Activated naive CD4-positive, alpha-beta T cell treated with anti-CD3 and anti-CD28 coated beads for 36 hours (primary cell): ENCODE measurements at regions of chrX and their contacts with region 1.

Region 1: DNA sequence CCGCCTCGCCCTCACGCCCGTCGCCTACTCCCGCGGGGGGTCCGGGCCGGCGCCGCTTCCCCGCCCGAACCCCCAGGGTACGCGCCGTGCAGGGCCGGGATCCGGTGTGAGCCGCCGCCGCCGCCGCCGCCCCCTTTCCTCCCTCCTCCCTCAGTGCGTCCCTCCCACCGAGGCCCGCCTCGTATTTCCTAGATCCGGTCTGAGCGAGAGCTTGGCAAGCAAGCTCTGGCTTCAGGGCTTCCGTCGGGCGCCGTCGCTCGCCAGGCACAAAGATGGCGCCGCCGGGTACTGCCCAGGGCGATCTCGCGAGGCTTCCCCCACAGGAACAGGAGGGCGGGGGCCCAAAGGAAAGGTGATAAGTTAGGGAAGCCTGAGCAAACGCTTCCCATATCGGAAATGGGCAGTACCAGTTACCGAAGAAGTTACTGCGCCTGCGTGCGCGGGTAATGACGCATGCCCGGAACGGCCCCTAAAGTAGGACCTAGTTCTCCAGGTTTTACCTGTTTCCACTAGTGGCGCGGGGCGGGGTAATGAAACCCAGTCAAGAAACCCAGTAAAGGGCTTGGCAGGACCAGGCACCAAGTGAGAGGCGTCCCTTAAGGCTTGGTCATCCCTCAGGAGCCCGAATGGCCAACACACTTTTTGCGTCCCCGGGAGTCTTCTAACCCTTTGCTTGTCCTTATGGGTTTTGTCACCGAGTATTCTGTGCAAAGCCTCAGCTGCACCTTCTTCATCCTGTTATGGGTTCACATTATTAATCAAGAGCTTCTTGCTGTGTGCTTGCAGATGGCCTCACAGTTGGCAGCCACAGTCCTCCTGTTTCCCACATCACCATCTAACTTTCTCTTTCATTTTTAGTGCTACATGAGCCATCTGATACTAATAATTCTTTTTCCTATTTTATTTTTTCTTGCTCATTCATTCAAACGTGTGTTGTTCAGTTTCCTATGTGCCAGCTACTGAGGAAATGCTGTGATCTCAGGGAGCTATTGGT is at the start of gene TAB3:
- DNase-seq: peak; percentile 95
- H3K4me3 Mint-ChIP-seq: peak within 1 kb of the TSS; percentile 85
- H3K27ac Mint-ChIP-seq: peak within 1 kb of the TSS; percentile 93
- H3K4me1 Mint-ChIP-seq: peaks cover 30% of the 10 kb centered on the region
- H3K27me3 Mint-ChIP-seq: no peaks in the 10 kb centered on the region
- total RNA-seq, gene TAB3: 13.6 to 15.7 TPM

Region 2: DNA sequence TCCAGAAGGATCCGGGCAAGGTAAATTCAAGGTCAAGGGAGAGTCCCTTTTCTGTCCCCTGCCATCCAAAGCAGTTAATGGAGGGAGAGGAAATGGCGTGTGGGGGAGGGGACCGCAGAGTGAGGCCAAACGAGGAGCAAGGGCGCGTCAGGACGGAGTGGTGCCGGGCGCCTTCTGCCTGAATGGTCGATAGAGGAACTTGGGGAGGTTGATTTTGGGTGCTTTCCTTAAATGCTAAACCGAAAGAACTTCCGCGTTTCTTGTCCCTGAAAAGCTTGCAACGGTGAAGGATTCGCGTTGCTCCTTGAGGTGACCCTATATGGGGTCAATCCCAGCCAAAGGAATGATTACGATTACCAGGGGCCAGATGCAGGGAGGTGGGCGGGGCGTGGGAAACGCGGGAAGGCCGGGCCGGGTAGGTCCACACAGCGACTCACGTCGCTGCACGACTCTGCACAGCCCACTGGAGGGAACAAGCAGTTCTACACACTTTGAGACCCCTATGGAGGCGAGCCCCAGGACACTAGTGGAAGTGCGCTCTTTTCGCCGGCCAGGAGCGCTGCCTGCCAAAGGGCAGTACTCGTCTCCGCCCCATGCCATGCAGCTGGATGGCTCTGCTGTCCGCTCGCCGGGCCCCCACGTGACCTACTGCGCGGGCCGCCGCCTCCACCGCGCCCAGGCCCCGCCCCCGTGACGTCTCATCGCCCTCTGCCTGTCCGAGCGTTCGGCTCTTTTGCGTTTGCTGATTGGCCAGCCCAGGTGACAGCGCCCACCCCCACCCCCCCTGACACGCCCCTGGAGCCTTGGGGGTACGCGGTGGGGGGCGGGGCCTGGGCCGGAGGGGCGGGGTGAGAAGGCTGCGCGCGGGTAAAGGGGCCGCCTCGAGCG is 236.7 kb before region 1 on chrX:
- CTCF ChIA-PET with region 1: no interaction called
- intact Hi-C with region 1: loop called (anchors 1 kb)
- DNase-seq: peak; percentile 93
- H3K4me3 Mint-ChIP-seq: peak overlapping the region; percentile 90
- H3K27ac Mint-ChIP-seq: peak overlapping the region; percentile 93
- H3K4me1 Mint-ChIP-seq: peaks cover 31% of the 10 kb centered on the region
- H3K27me3 Mint-ChIP-seq: no peaks in the 10 kb centered on the region

Region 3: DNA sequence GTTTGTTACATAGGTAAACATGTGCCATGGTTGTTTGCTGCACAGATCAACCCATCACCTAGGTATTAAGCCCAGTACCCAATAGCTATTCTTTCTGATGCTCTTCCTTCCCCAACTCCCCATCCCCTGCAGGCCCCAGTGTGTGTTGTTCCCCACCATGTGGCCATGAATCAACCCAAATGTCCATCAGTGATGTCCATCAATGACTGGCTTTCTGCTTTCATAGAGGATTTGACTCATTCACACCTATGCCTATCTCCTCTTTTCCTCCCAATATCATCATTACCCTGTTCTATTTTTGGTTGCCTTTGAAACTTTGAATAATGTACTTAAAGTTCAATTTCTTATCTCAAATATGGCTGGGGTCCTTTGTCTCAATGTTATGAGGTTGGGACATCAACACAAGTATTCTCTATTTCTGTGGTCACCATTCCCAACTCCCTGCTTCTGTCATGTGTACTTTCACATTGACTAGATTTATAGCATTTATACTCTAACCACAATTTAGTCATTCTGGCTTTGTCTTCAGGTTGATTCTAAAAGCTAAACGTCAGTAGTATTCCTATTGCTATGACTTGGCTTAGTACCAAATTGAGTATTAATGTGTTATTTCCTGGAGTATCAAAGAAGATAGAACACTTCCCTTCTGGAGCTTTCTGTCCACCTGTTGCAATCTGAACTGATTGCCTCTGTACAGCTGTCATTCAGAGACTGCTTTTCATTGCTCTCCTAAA is 107.6 kb before region 1 on chrX:
- CTCF ChIA-PET with region 1: no interaction called
- intact Hi-C with region 1: loop called (anchors 1 kb)
- DNase-seq: no peak
- H3K4me3 Mint-ChIP-seq: no peak overlapping the region
- H3K27ac Mint-ChIP-seq: no peak overlapping the region
- H3K4me1 Mint-ChIP-seq: peaks cover 21% of the 10 kb centered on the region
- H3K27me3 Mint-ChIP-seq: peaks cover 2% of the 10 kb centered on the region

Region 4: DNA sequence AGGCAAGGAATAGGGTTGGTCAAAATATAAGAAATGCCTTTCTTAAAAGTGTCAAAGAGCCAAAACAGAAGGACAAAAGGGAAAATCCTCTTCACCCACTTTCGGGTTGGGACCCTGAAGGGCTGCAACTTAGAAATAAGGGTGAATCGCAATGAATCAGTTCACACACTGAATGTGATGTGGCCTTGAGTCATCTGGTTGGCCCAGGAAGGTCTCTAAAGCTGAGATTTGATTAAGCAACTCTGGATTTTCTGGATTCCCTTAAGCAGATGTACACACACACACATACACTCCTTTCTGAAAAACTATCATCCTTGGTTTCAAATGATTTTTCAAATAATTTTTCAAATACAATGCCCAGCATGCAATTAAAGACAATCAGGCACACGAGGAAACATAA is 13.5 kb before region 1 on chrX:
- CTCF ChIA-PET with region 1: no interaction called
- intact Hi-C with region 1: loop called (anchors 1 kb)
- DNase-seq: peak; percentile 37
- H3K4me3 Mint-ChIP-seq: no peak overlapping the region
- H3K27ac Mint-ChIP-seq: no peak overlapping the region
- H3K4me1 Mint-ChIP-seq: peaks cover 41% of the 10 kb centered on the region
- H3K27me3 Mint-ChIP-seq: no peaks in the 10 kb centered on the region

Region 5: DNA sequence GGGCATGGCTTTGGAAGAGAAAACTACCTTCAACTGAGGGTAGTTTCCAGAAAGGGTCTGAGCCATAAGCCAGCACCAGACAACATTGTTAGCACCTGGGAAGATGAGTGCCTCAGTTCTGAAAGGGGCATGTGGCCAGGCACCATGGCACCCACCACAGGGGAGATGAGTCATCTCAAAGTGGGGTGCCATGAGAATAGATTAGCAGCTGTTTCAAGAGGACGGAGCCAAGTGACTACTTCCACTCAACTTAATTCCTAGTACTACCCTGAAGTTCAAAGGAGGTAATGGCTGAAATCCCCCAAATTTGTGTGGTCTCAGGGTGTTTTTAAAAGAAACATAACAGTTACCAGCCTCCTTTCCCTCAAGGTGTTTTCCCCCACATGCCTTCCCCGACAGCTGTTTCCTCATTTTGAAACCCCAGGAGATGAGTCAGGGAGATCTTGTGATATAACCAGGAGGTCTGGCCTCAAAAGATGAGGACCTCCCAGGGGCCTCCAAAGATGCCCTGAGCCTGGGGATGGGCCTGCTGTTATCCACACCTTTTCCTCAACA is 210.2 kb after region 1 on chrX:
- CTCF ChIA-PET with region 1: no interaction called
- intact Hi-C with region 1: loop called (anchors 5 kb)
- DNase-seq: peak; percentile 67
- H3K4me3 Mint-ChIP-seq: no peak overlapping the region
- H3K27ac Mint-ChIP-seq: no peak overlapping the region
- H3K4me1 Mint-ChIP-seq: peaks cover 4% of the 10 kb centered on the region
- H3K27me3 Mint-ChIP-seq: no peaks in the 10 kb centered on the region